ENCODE measurements at regions of chr4 and their contacts with region 1.

Region 1: GRCh38 chr4:110970642-110971041 is 347.8 kb upstream of the PITX2 start:
- DNase-seq: peak in 1 of 2 donors; percentile 41
- ATAC-seq: peak; percentile 58 to 88 (median 72)
- H3K4me3 ChIP-seq: no peak overlapping the region
- H3K27ac ChIP-seq: no peak overlapping the region
- H3K4me1 ChIP-seq: no peaks in the 10 kb centered on the region
- H3K27me3 ChIP-seq: no peaks in the 10 kb centered on the region
- CTCF ChIP-seq: peak; percentile 49

Region 2: GRCh38 chr4:110260299-110260698 is 710.3 kb before region 1 on chr4:
- intact Hi-C with region 1: no loop called
- DNase-seq: no peak
- ATAC-seq: no peak
- H3K4me3 ChIP-seq: no peak overlapping the region
- H3K27ac ChIP-seq: no peak overlapping the region
- H3K4me1 ChIP-seq: no peaks in the 10 kb centered on the region
- H3K27me3 ChIP-seq: no peaks in the 10 kb centered on the region
- CTCF ChIP-seq: no peak

Region 3: DNA sequence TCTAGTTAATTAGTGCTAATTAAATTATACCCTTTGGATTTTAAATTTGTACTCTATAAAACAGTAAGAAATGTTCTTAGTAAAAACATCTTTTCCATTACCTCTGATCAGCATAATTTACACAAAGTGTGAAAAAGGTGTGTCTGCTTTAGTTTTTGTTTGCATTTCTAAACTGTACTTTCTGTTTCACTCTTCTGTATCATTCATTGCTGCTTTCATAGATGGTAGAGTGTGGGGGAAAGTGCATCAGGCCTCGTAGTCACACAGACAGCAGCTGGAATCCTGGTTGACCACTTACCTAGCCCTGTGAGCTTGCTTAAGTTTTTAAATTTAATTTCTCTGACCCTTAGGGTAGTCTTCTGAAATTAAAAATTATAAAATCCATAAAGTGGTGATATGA is 72.4 kb before region 1 on chr4:
- intact Hi-C with region 1: no loop called
- DNase-seq: no peak
- ATAC-seq: no peak
- H3K4me3 ChIP-seq: no peak overlapping the region
- H3K27ac ChIP-seq: no peak overlapping the region
- H3K4me1 ChIP-seq: no peaks in the 10 kb centered on the region
- H3K27me3 ChIP-seq: no peaks in the 10 kb centered on the region
- CTCF ChIP-seq: no peak

Region 4: GRCh38 chr4:111283061-111283677 is 312.5 kb after region 1 on chr4:
- intact Hi-C with region 1: loop called in 1 of 2 experiments (anchors 10 kb)
- DNase-seq: peak; percentile 47 to 69
- ATAC-seq: peak; percentile 39 to 72 (median 55)
- H3K4me3 ChIP-seq: no peak overlapping the region
- H3K27ac ChIP-seq: no peak overlapping the region
- H3K4me1 ChIP-seq: no peaks in the 10 kb centered on the region
- H3K27me3 ChIP-seq: no peaks in the 10 kb centered on the region
- CTCF ChIP-seq: peak; percentile 84

Measured in psoas muscle (tissue), 8 donors.